ENCODE measurements at regions of chr21 and their contacts with region 1.

Region 1: GRCh38 chr21:35138665-35139381 is 89.7 kb upstream of the RUNX1 start:
- H3K4me3 Mint-ChIP-seq: no peak overlapping the region
- H3K27ac Mint-ChIP-seq: no peak overlapping the region
- H3K4me1 Mint-ChIP-seq: peaks cover 19% of the 10 kb centered on the region
- H3K27me3 Mint-ChIP-seq: peaks cover 4% of the 10 kb centered on the region

Region 2: GRCh38 chr21:34946385-34946840 is 192.4 kb before region 1 on chr21:
- intact Hi-C with region 1: no loop called
- H3K4me3 Mint-ChIP-seq: no peak overlapping the region
- H3K27ac Mint-ChIP-seq: peak overlapping the region; percentile 6
- H3K4me1 Mint-ChIP-seq: peaks cover 39% of the 10 kb centered on the region
- H3K27me3 Mint-ChIP-seq: no peaks in the 10 kb centered on the region

Region 3: GRCh38 chr21:35075546-35075945 is 63.3 kb before region 1 on chr21:
- intact Hi-C with region 1: loop called (anchors 10 kb)
- H3K4me3 Mint-ChIP-seq: no peak overlapping the region
- H3K27ac Mint-ChIP-seq: no peak overlapping the region
- H3K4me1 Mint-ChIP-seq: peaks cover 5% of the 10 kb centered on the region
- H3K27me3 Mint-ChIP-seq: peaks cover 4% of the 10 kb centered on the region